SK-N-SH (cell line): ENCODE measurements at regions of chr9 and their contacts with region 1.

Region 1: GRCh38 chr9:17063535-17064135 is 71.2 kb upstream of the CNTLN start:
- DNase-seq: peak; percentile 56
- H3K4me3 ChIP-seq: no peak overlapping the region; a peak in 1 of 4 replicates
- H3K27ac ChIP-seq: peak overlapping the region in 1 of 2 experiments; percentile 93; a peak in 1 of 4 replicates
- H3K4me1 ChIP-seq: peaks cover 0 to 25% of the 10 kb centered on the region in 2 experiments; a peak in 2 of 4 replicates
- H3K27me3 ChIP-seq: no peaks in the 10 kb centered on the region
- CTCF ChIP-seq: peak; percentile 88
- EP300 ChIP-seq: no peak
- RAD21 ChIP-seq: peak; percentile 93

Region 2: GRCh38 chr9:17052626-17053025 is 11.0 kb before region 1 on chr9:
- CTCF ChIA-PET with region 1: interaction called, 10 read pairs
- POLR2A ChIA-PET with region 1: no interaction called
- DNase-seq: no peak
- H3K4me3 ChIP-seq: no peak overlapping the region
- H3K27ac ChIP-seq: no peak overlapping the region
- H3K4me1 ChIP-seq: no peaks in the 10 kb centered on the region
- H3K27me3 ChIP-seq: no peaks in the 10 kb centered on the region
- CTCF ChIP-seq: no peak
- EP300 ChIP-seq: no peak
- RAD21 ChIP-seq: no peak

Region 3: DNA sequence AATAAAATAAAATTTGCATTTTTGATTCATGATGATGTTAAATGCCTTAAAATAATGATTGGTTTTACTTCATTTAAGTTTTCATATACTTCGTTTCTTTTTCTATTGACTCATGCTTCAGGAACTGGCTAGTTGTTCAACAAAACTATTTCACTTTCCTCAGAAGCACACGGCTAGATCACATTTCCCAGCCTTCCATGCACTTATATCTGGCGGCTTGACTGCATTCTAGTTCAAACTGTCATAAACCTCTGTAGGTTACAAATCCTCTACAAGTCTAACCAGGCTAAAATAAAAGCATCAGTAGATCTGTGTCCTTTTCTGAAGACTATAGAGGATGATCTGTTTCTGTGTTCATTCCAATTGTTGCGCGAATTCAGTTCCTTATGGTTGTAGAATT is 24.9 kb after region 1 on chr9:
- CTCF ChIA-PET with region 1: no interaction called
- POLR2A ChIA-PET with region 1: no interaction called
- DNase-seq: no peak
- H3K4me3 ChIP-seq: no peak overlapping the region
- H3K27ac ChIP-seq: no peak overlapping the region
- H3K4me1 ChIP-seq: no peaks in the 10 kb centered on the region
- H3K27me3 ChIP-seq: no peaks in the 10 kb centered on the region
- CTCF ChIP-seq: no peak
- EP300 ChIP-seq: no peak
- RAD21 ChIP-seq: no peak

Region 4: GRCh38 chr9:17116400-17116837 is 52.8 kb after region 1 on chr9:
- CTCF ChIA-PET with region 1: interaction called, 19 read pairs
- POLR2A ChIA-PET with region 1: no interaction called
- DNase-seq: peak; percentile 27
- H3K4me3 ChIP-seq: no peak overlapping the region; a peak in 1 of 4 replicates
- H3K27ac ChIP-seq: no peak overlapping the region
- H3K4me1 ChIP-seq: no peaks in the 10 kb centered on the region; a peak in 1 of 4 replicates
- H3K27me3 ChIP-seq: no peaks in the 10 kb centered on the region
- CTCF ChIP-seq: peak; percentile 59
- EP300 ChIP-seq: no peak
- RAD21 ChIP-seq: peak; percentile 43; the same call in 1 of the 2 replicates

Region 5: DNA sequence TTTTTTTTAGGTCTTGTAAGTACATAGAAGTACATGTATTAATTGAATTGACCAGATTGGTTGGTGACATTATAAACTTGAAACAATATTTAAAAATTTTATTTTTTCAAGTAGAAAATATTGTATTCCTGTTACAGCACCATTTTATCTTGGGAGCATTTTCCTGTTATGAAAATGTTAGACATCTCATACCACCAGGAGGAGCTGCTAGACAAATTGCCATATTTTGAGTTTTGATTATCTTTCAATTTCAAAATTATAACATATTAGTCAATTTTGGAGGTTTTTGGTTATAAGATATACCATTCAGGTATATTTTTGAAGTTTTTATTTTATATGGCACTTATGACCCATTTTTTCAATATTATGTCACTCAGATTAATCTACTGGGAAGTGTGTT is 155.6 kb after region 1 on chr9:
- CTCF ChIA-PET with region 1: no interaction called
- POLR2A ChIA-PET with region 1: no interaction called
- DNase-seq: no peak
- H3K4me3 ChIP-seq: no peak overlapping the region
- H3K27ac ChIP-seq: no peak overlapping the region
- H3K4me1 ChIP-seq: peaks cover 0 to 8% of the 10 kb centered on the region in 2 experiments; a peak in 2 of 4 replicates
- H3K27me3 ChIP-seq: no peaks in the 10 kb centered on the region
- CTCF ChIP-seq: peak; percentile 51
- EP300 ChIP-seq: no peak
- RAD21 ChIP-seq: peak; percentile 59

Region 6: GRCh38 chr9:17462869-17463464 is 399.3 kb after region 1 on chr9:
- CTCF ChIA-PET with region 1: interaction called, 25 read pairs
- POLR2A ChIA-PET with region 1: no interaction called
- DNase-seq: peak; percentile 24
- H3K4me3 ChIP-seq: no peak overlapping the region; a peak in 1 of 4 replicates
- H3K27ac ChIP-seq: no peak overlapping the region
- H3K4me1 ChIP-seq: no peaks in the 10 kb centered on the region; a peak in 1 of 4 replicates
- H3K27me3 ChIP-seq: no peaks in the 10 kb centered on the region
- CTCF ChIP-seq: peak; percentile 88
- EP300 ChIP-seq: no peak
- RAD21 ChIP-seq: peak; percentile 93